ENCODE measurements at regions of chr10 and their contacts with region 1.

Region 1: DNA sequence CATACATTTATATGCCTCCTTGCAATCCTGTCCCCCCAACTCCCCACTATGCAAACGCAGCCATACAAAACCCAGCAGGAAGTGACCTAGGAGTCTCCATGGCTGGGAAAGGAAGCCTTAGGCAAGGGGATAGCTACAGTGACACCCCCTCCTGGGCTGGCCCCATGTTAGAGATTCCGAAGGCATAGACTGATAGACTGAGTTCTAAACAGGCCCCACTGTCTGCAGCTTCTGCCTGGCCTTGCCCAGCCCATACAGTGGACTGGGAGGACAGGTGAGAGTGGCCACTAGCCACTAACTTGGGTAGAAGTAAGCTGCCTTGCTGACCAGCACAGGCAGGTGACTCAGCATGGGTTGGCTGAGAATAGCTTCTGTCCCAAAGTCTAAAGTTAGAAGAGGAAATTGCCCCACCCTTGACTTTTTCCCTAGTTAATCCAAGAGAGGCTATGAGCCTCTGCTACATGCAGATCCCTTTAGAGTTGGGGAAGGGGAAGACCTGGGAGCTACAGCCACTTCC is 106.3 kb downstream of the C10orf105 start:
- DNase-seq: peak; percentile 66
- H3K4me3 Mint-ChIP-seq: no peak overlapping the region
- H3K27ac Mint-ChIP-seq: peak overlapping the region; percentile 58
- H3K4me1 Mint-ChIP-seq: peaks cover 22% of the 10 kb centered on the region
- H3K27me3 Mint-ChIP-seq: peaks cover 24% of the 10 kb centered on the region
- CTCF ChIP-seq: no peak

Region 2: GRCh38 chr10:71486484-71487114 is 126.7 kb before region 1 on chr10:
- CTCF ChIA-PET with region 1: no interaction called
- intact Hi-C with region 1: loop called (anchors 2 kb)
- DNase-seq: peak; percentile 83
- H3K4me3 Mint-ChIP-seq: no peak overlapping the region
- H3K27ac Mint-ChIP-seq: no peak overlapping the region
- H3K4me1 Mint-ChIP-seq: no peaks in the 10 kb centered on the region
- H3K27me3 Mint-ChIP-seq: peaks cover 96% of the 10 kb centered on the region
- CTCF ChIP-seq: peak; percentile 71

Region 3: DNA sequence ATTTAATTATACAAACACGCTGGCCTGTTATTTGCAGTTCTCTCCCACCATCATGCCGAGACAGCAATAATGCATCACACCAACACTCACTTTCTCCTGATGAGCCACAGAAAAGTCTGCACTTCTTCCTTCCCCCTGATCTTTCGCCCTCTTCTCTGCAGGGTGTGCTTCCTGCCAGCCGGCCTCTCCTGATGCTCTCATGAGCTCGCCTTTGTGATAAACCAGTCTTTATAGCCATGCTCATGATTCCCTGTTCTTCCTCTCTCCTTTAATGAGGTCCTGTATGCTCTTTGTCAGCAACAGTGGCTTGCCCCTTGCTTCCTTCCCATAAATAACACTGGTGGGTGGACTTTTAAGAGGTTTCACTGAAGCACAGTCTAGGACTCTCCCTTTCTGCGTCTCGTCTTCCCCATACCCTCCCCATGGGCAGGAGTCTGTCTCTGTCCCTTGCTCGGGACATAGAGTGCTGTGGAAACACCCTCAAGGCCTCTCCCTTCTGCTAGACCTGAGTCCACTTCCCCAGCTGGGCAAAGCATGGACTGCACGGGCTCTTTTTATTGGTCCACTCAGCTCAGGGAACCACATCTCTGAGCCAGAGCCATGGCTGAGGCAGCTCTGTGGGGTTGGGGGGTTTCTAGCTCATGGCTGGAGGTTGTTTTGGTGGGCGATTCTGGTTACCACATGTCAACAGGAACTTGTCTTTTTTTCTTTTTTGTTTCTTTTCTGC is 27.6 kb before region 1 on chr10:
- CTCF ChIA-PET with region 1: interaction called, 10 read pairs
- intact Hi-C with region 1: no loop called
- DNase-seq: no peak
- H3K4me3 Mint-ChIP-seq: no peak overlapping the region
- H3K27ac Mint-ChIP-seq: no peak overlapping the region
- H3K4me1 Mint-ChIP-seq: no peaks in the 10 kb centered on the region
- H3K27me3 Mint-ChIP-seq: peaks cover under 1% of the 10 kb centered on the region
- CTCF ChIP-seq: no peak

Measured in Calu3 (cell line).